ENCODE measurements at regions of chr6 and their contacts with region 1.

Region 1: GRCh38 chr6:43913375-43914271 is 143.6 kb downstream of the VEGFA start:
- DNase-seq: no peak
- H3K4me3 ChIP-seq: no peak overlapping the region
- H3K27ac ChIP-seq: no peak overlapping the region
- H3K4me1 ChIP-seq: no peaks in the 10 kb centered on the region
- H3K27me3 ChIP-seq: no peaks in the 10 kb centered on the region
- CTCF ChIP-seq: no peak
- POLR2A ChIP-seq: no peak

Region 2: GRCh38 chr6:43926634-43927524 is 13.3 kb after region 1 on chr6:
- CTCF ChIA-PET with region 1: interaction called, 20 read pairs
- POLR2A ChIA-PET with region 1: no interaction called
- dilution Hi-C with region 1: no loop called
- intact Hi-C with region 1: no loop called
- DNase-seq: peak; percentile 57
- H3K4me3 ChIP-seq: no peak overlapping the region
- H3K27ac ChIP-seq: no peak overlapping the region
- H3K4me1 ChIP-seq: peaks cover 2% of the 10 kb centered on the region
- H3K27me3 ChIP-seq: no peaks in the 10 kb centered on the region
- CTCF ChIP-seq: no peak
- POLR2A ChIP-seq: no peak